ENCODE measurements at regions of chr1 and their contacts with region 1.

Region 1: DNA sequence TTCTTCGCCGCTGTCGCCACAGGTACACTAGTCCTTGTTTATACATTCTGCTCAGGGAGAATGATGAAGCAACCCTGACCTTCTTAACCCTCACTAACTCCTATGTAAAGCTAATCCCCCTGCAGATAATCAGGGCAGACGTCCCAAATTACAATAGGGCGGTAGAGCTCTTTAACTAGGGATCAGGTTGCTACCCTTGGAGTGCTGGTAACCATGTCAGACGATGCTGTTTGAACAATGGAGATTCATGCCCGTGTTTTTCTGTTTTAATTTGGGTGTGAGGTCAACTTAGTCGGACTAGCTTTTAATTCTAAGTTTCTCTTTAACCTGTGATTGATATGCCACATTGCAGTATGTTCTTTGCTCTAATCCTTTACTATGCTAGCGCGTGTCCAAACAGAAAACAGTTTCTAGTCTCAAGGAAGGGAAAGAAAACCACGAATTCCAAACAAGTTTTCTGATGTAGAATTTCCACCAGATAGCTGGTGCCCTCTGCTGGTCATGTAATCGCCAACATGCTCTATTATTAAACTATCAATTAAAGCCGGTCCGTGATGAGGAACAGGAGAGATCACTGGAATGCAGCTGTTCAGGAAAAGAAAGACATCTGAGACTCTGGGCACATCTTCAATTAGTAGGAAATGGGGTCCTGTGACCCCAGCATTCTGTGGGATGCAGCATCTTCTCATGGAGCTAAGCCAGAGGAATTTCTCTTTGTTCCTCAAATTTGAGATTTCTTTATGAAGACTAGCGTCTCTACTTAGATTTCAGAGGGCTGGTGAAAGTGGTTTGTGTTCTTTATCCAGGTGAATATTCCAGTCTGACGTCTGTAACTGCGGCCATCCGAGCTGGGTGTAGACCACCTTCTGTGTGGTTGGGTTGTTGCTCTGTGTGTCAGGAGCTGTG is 18.3 kb upstream of the VAMP3 start:
- DNase-seq: peak in 1 of 2 donors; percentile 77
- H3K4me3 ChIP-seq: peak overlapping the region; percentile 25 to 49
- H3K27ac ChIP-seq: no peak overlapping the region
- H3K4me1 ChIP-seq: peaks cover 0 to 4% of the 10 kb centered on the region in 2 donors
- H3K27me3 ChIP-seq: no peaks in the 10 kb centered on the region
- CTCF ChIP-seq: peak; percentile 71 to 82 (median 71)

Region 2: GRCh38 chr1:7667625-7668218 is 85.0 kb before region 1 on chr1:
- intact Hi-C with region 1: loop called (anchors 1 kb)
- DNase-seq: peak; percentile 61 to 95
- H3K4me3 ChIP-seq: no peak overlapping the region
- H3K27ac ChIP-seq: no peak overlapping the region
- H3K4me1 ChIP-seq: no peaks in the 10 kb centered on the region
- H3K27me3 ChIP-seq: no peaks in the 10 kb centered on the region
- CTCF ChIP-seq: peak; percentile 99 to 100 (median 100)

Region 3: GRCh38 chr1:7795406-7795805 is 42.6 kb after region 1 on chr1:
- intact Hi-C with region 1: no loop called
- DNase-seq: no peak
- H3K4me3 ChIP-seq: no peak overlapping the region
- H3K27ac ChIP-seq: no peak overlapping the region
- H3K4me1 ChIP-seq: no peaks in the 10 kb centered on the region
- H3K27me3 ChIP-seq: no peaks in the 10 kb centered on the region
- CTCF ChIP-seq: no peak